ENCODE measurements at regions of chr22 and their contacts with region 1.

Region 1: GRCh38 chr22:45785458-45785857 is 113.8 kb downstream of the ATXN10 start:
- DNase-seq: no peak
- ATAC-seq: no peak
- H3K4me3 ChIP-seq: no peak overlapping the region
- H3K27ac ChIP-seq: no peak overlapping the region
- H3K4me1 ChIP-seq: peaks cover 0 to 41% (median 32%) of the 10 kb centered on the region in 9 donors
- H3K27me3 ChIP-seq: no peaks in the 10 kb centered on the region
- CTCF ChIP-seq: no peak

Region 2: GRCh38 chr22:45240810-45241631 is 544.4 kb before region 1 on chr22 and contains the start of gene KIAA0930:
- intact Hi-C with region 1: loop called in 1 of 10 experiments (anchors 10 kb)
- DNase-seq: peak; percentile 83 to 90
- ATAC-seq: peak; percentile 69 to 87 (median 78)
- H3K4me3 ChIP-seq: peak within 1 kb of the TSS; percentile 44 to 77 (median 62)
- H3K27ac ChIP-seq: peak within 1 kb of the TSS in 6 of 10 donors; percentile 19 to 80 (median 42)
- H3K4me1 ChIP-seq: peaks cover 3 to 50% (median 17%) of the 10 kb centered on the region in 9 donors
- H3K27me3 ChIP-seq: no peaks in the 10 kb centered on the region
- CTCF ChIP-seq: no peak
- total RNA-seq, gene KIAA0930: 12.2 to 48.3 (median 16.9) TPM

Region 3: GRCh38 chr22:45717789-45718188 is 67.7 kb before region 1 on chr22:
- intact Hi-C with region 1: no loop called
- DNase-seq: no peak
- ATAC-seq: no peak
- H3K4me3 ChIP-seq: no peak overlapping the region
- H3K27ac ChIP-seq: no peak overlapping the region
- H3K4me1 ChIP-seq: peaks cover 0 to 2% (median 0%) of the 10 kb centered on the region in 9 donors
- H3K27me3 ChIP-seq: no peaks in the 10 kb centered on the region
- CTCF ChIP-seq: no peak